ENCODE measurements at regions of chr6 and their contacts with region 1.

Region 1: DNA sequence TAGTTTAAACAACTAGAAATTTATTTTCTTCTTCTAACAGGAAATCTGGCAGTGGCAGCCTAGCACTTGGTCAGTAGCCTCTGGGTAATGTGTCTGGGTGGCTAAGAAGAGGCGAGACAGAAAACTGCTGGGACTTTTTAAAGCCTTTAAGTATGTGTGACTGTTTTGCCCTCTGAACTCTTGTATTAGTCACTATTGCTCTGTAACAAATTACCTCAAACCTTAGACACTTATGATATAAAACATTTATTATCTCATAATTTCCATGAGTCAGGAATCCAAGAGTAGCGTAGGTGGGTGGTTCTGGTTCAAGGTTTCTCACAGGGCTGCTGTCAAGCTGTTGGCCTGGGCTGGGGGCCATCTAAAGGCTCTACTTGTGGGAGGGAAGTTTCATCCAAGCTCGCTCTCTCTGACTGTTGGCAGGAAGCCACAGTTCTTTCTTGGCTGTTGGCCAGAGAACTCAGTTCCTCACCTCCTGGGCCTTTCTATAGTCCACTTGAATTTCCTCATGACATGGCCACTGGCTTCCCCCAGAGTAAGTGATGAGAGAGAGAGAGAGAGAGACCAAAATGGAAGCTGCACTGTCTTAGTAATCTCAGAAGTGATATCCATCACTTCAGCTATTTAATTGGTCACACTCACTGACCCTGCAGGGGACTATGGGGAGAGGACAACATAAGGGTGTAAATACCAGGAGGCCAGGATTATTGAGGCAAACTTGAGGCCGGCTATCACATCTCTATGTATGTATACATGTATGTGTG is 17.4 kb upstream of the TBC1D22B start:
- DNase-seq: peak; percentile 99
- H3K4me3 ChIP-seq: no peak overlapping the region
- H3K27ac ChIP-seq: peak overlapping the region; percentile 99
- H3K4me1 ChIP-seq: peaks cover 67% of the 10 kb centered on the region
- H3K27me3 ChIP-seq: no peaks in the 10 kb centered on the region
- CTCF ChIP-seq: no peak
- POLR2A ChIP-seq: no peak

Region 2: DNA sequence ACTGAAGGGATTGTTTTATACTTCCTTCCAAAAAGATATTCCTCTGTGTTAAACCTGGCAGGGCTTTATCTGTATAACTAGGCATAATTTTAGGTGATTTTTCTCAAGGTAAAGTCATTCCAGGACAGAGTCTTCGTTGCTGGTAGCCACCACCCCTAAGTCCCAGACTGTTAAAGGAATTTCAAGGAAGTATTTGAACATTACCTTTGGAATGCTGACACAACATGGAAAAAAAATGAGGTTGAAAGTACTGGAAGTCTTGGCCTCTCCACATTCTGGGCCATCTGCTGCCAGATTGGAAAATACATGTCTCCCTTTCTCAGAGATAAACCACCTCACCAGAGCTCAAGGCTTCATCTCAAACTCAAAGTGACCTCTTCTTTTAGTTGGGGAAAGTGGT is 825.7 kb before region 1 on chr6:
- CTCF ChIA-PET with region 1: no interaction called
- POLR2A ChIA-PET with region 1: no interaction called
- dilution Hi-C with region 1: no loop called
- intact Hi-C with region 1: no loop called
- DNase-seq: no peak
- H3K4me3 ChIP-seq: no peak overlapping the region
- H3K27ac ChIP-seq: no peak overlapping the region
- H3K4me1 ChIP-seq: peaks cover 5% of the 10 kb centered on the region
- H3K27me3 ChIP-seq: no peaks in the 10 kb centered on the region
- CTCF ChIP-seq: no peak
- POLR2A ChIP-seq: no peak

Region 3: DNA sequence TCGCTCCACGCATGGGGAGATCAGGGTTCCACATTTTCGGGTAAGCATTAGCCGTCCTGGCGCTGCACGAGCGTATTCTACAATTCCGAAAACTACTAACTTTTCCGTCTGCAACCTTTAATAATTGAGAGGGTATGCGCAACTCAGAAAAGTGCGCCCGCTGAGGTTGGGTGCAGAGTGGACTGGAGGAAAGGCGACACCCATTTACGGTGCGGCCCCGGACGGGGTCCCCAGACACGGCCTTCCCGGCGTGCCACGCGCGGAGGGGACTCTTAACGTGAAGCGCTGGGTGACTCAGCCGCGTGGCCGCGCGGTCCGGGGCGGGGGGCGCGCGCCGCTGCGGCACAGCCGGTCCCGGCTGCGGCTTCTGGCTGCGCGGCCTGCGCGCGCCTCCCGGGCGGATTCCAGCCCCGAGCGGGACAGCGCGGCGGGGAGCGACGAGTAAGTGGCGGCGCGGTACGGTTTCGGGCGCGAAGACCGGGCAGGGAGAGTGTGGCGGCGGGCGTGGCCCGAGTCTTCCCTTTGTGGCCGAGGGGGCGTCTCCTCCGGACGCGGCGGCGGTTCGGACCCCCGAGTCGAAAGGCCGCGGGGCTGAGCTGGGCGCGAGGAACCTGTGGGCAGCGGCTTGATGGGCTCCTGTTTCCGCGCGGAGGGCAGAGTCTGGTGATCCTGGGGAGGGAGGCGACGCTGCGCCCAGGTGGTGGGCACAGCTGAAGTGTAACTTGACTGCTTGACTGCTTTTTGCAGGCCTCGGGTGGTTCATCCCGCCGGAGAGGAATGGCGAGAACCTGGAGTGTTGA is 797.3 kb before region 1 on chr6 and contains the starts of genes KCTD20 and PXT1:
- CTCF ChIA-PET with region 1: no interaction called
- POLR2A ChIA-PET with region 1: no interaction called
- dilution Hi-C with region 1: no loop called
- intact Hi-C with region 1: loop called (anchors 5 kb)
- DNase-seq: peak; percentile 81
- H3K4me3 ChIP-seq: peak within 1 kb of the TSS; percentile 78 to 96 (median 91)
- H3K27ac ChIP-seq: peak within 1 kb of the TSS; percentile 95
- H3K4me1 ChIP-seq: peaks cover 36% of the 10 kb centered on the region
- H3K27me3 ChIP-seq: no peaks in the 10 kb centered on the region
- CTCF ChIP-seq: no peak
- POLR2A ChIP-seq: peak; percentile 95
- total RNA-seq, gene KCTD20: 47.2 and 49.2 TPM in 2 replicates
- total RNA-seq, gene PXT1: not detected in 2 replicates

Region 4: GRCh38 chr6:36827261-36828079 is 412.7 kb before region 1 on chr6:
- CTCF ChIA-PET with region 1: no interaction called
- POLR2A ChIA-PET with region 1: no interaction called
- dilution Hi-C with region 1: no loop called
- intact Hi-C with region 1: loop called (anchors 2 kb)
- DNase-seq: peak; percentile 99
- H3K4me3 ChIP-seq: peak overlapping the region in 1 of 3 experiments; percentile 13
- H3K27ac ChIP-seq: peak overlapping the region; percentile 100
- H3K4me1 ChIP-seq: peaks cover 72% of the 10 kb centered on the region
- H3K27me3 ChIP-seq: no peaks in the 10 kb centered on the region
- CTCF ChIP-seq: no peak
- POLR2A ChIP-seq: peak; percentile 59

Region 5: GRCh38 chr6:37137201-37138090 is 102.7 kb before region 1 on chr6:
- CTCF ChIA-PET with region 1: no interaction called
- POLR2A ChIA-PET with region 1: no interaction called
- dilution Hi-C with region 1: no loop called
- intact Hi-C with region 1: loop called (anchors 2 kb)
- DNase-seq: peak; percentile 96
- H3K4me3 ChIP-seq: no peak overlapping the region
- H3K27ac ChIP-seq: peak overlapping the region; percentile 99
- H3K4me1 ChIP-seq: peaks cover 44% of the 10 kb centered on the region
- H3K27me3 ChIP-seq: no peaks in the 10 kb centered on the region
- CTCF ChIP-seq: no peak
- POLR2A ChIP-seq: no peak

Region 6: GRCh38 chr6:37222125-37222967 is 17.8 kb before region 1 on chr6:
- CTCF ChIA-PET with region 1: no interaction called
- POLR2A ChIA-PET with region 1: no interaction called
- dilution Hi-C with region 1: no loop called
- intact Hi-C with region 1: loop called (anchors 2 kb)
- DNase-seq: peak; percentile 86
- H3K4me3 ChIP-seq: peak overlapping the region; percentile 8 to 43 (median 31)
- H3K27ac ChIP-seq: no peak overlapping the region
- H3K4me1 ChIP-seq: peaks cover 7% of the 10 kb centered on the region
- H3K27me3 ChIP-seq: no peaks in the 10 kb centered on the region
- CTCF ChIP-seq: no peak
- POLR2A ChIP-seq: no peak

Region 7: GRCh38 chr6:37257634-37258404 is 17.7 kb after region 1 on chr6 and contains the starts of genes TBC1D22B and TMEM217:
- CTCF ChIA-PET with region 1: interaction called, 8 read pairs
- POLR2A ChIA-PET with region 1: interaction called, 6 read pairs
- dilution Hi-C with region 1: no loop called
- intact Hi-C with region 1: loop called (anchors 1 kb)
- DNase-seq: peak; percentile 96
- H3K4me3 ChIP-seq: peak within 1 kb of the TSS; percentile 70 to 98 (median 80)
- H3K27ac ChIP-seq: peak within 1 kb of the TSS; percentile 97
- H3K4me1 ChIP-seq: peaks cover 22% of the 10 kb centered on the region
- H3K27me3 ChIP-seq: no peaks in the 10 kb centered on the region
- CTCF ChIP-seq: no peak
- POLR2A ChIP-seq: peak; percentile 64
- total RNA-seq, gene TBC1D22B: 12.7 and 13.6 TPM in 2 replicates
- total RNA-seq, gene TMEM217: 6.5 and 6.8 TPM in 2 replicates

Measured in endothelial cell of umbilical vein (primary cell).